Caco-2 (cell line): ENCODE measurements at regions of chr1 and their contacts with region 1.

Region 1: GRCh38 chr1:111507411-111508201 is 4.2 kb upstream of the ADORA3 start:
- DNase-seq: peak; percentile 74
- H3K4me3 ChIP-seq: peak overlapping the region; percentile 36
- H3K4me3 Mint-ChIP-seq: peak overlapping the region; percentile 73
- H3K27ac Mint-ChIP-seq: peak overlapping the region; percentile 94
- H3K4me1 ChIP-seq: peaks cover 28% of the 10 kb centered on the region
- H3K4me1 Mint-ChIP-seq: peaks cover 13% of the 10 kb centered on the region
- H3K27me3 ChIP-seq: no peaks in the 10 kb centered on the region
- H3K27me3 Mint-ChIP-seq: no peaks in the 10 kb centered on the region
- CTCF ChIP-seq: peak in 1 of 2 experiments; percentile 30

Region 2: GRCh38 chr1:111441573-111442192 is 65.9 kb before region 1 on chr1:
- CTCF ChIA-PET with region 1: no interaction called
- POLR2A ChIA-PET with region 1: no interaction called
- intact Hi-C with region 1: no loop called
- DNase-seq: peak; percentile 44 to 53
- H3K4me3 ChIP-seq: no peak overlapping the region
- H3K4me3 Mint-ChIP-seq: no peak overlapping the region
- H3K27ac Mint-ChIP-seq: no peak overlapping the region
- H3K4me1 ChIP-seq: peaks cover 7% of the 10 kb centered on the region
- H3K4me1 Mint-ChIP-seq: peaks cover 13% of the 10 kb centered on the region
- H3K27me3 ChIP-seq: no peaks in the 10 kb centered on the region
- H3K27me3 Mint-ChIP-seq: no peaks in the 10 kb centered on the region
- CTCF ChIP-seq: peak; percentile 41 to 63

Region 3: DNA sequence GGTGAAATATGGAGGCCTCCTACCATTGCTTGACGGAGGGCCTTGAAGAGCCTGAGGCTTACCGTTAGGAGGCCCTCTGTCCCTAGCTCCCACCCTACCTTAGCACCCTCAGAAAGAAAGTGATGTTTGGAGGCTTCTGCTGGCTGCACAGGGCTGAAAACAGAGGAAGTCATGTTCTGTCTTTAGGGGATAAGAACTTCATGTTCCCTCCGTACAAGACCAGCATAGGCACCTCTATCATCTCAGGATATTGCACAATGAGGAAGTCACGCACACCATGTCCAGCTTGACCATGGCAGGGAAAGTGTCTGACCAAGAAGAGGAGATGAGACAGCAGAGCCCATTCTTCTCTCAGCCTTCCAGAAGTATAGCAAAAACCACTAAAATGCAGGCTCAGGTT is 18.0 kb before region 1 on chr1:
- CTCF ChIA-PET with region 1: no interaction called
- POLR2A ChIA-PET with region 1: no interaction called
- intact Hi-C with region 1: no loop called
- DNase-seq: no peak
- H3K4me3 ChIP-seq: no peak overlapping the region
- H3K4me3 Mint-ChIP-seq: no peak overlapping the region
- H3K27ac Mint-ChIP-seq: no peak overlapping the region
- H3K4me1 ChIP-seq: no peaks in the 10 kb centered on the region
- H3K4me1 Mint-ChIP-seq: no peaks in the 10 kb centered on the region
- H3K27me3 ChIP-seq: no peaks in the 10 kb centered on the region
- H3K27me3 Mint-ChIP-seq: no peaks in the 10 kb centered on the region
- CTCF ChIP-seq: no peak

Region 4: DNA sequence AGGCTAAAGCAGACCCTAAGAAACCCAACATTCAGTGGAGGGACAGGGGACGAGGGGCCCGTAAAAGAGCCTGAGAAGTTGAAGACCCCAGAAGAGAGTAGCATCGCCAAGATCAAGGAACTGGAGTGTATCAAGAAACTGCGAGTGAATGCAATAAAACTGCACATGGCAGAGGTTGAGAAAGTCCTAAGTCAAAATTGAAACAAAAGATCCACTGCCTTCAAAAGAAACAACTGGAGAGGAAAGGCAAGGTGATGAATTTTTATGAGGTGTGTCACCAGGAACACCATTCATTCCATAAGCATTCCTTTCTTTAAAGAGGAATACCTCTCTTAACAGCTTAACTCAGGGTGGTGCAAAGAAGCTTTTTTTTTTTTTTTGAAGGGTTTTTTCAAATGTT is 34.1 kb after region 1 on chr1:
- CTCF ChIA-PET with region 1: interaction called, 10 read pairs
- POLR2A ChIA-PET with region 1: no interaction called
- intact Hi-C with region 1: no loop called
- DNase-seq: peak in 1 of 2 experiments; percentile 28
- H3K4me3 ChIP-seq: no peak overlapping the region
- H3K4me3 Mint-ChIP-seq: peak overlapping the region; percentile 80
- H3K27ac Mint-ChIP-seq: peak overlapping the region; percentile 88
- H3K4me1 ChIP-seq: peaks cover 15% of the 10 kb centered on the region
- H3K4me1 Mint-ChIP-seq: peaks cover 27% of the 10 kb centered on the region
- H3K27me3 ChIP-seq: no peaks in the 10 kb centered on the region
- H3K27me3 Mint-ChIP-seq: no peaks in the 10 kb centered on the region
- CTCF ChIP-seq: no peak

Region 5: DNA sequence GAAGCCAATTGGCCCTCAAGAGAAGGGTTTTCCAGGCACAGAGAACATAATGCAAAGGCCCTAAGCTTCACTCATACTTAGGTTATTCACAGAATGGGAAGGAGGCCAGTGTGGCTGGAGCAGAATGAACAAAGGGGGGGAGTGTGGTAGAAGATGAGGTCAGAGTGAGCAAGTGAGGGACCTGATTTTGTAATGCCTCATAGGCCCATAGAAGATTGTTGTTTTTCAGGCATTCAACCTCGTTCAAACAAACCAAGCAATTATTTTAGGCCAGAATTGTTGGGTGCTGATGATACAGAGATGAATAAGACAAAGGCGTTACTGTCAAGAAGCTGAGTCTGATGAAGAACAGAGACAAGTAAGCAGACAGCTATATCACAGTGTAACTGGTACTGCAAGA is 57.5 kb after region 1 on chr1:
- CTCF ChIA-PET with region 1: interaction called, 8 read pairs
- POLR2A ChIA-PET with region 1: no interaction called
- intact Hi-C with region 1: loop called (anchors 5 kb)
- DNase-seq: no peak
- H3K4me3 ChIP-seq: no peak overlapping the region
- H3K4me3 Mint-ChIP-seq: no peak overlapping the region
- H3K27ac Mint-ChIP-seq: peak overlapping the region; percentile 73
- H3K4me1 ChIP-seq: peaks cover 45% of the 10 kb centered on the region
- H3K4me1 Mint-ChIP-seq: peaks cover 44% of the 10 kb centered on the region
- H3K27me3 ChIP-seq: no peaks in the 10 kb centered on the region
- H3K27me3 Mint-ChIP-seq: no peaks in the 10 kb centered on the region
- CTCF ChIP-seq: no peak

Region 6: DNA sequence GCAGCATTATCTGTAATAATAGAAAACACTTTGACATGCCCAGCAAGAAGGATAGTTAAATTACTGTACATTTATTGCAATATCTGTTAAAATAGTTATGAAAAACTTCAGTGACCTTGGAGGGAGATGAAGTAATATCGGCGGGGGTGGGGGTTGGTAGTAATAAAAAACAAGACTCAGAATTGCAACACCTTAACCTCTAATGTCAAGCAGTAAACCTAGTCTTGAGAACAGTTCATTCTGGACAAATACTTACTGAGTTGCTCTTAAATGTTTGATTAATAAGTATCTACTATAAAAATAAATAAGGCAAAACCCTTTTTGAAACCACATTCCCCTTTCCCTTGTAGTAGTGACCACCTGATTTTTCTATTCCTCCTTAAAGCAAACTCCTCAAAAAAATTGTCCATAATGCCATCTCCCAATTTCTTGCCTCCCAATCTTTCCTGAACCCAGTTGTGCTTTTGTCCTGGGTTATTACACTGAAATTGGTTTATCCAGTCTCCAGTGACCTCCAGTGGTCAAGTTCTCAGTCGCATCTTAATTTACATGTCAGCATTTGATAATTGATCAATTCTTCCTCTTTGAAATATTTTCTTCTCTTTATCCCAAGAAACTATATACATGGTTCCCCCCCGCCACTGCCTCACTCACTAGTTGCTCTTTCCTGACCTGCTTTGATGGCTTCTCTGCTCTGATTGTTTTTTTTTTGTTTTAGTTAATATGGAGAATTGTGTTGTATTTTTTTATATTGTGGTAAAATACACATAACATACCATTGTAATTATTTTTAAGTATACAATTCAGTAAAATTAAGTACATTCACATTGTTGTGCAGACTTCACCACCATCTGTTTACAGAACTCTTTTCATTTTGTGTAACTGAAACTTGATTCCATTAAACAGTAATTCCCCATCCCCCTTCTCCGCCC is 148.7 kb after region 1 on chr1:
- CTCF ChIA-PET with region 1: interaction called, 6 read pairs
- POLR2A ChIA-PET with region 1: no interaction called
- intact Hi-C with region 1: loop called (anchors 1 kb)
- DNase-seq: peak in 1 of 2 experiments; percentile 48
- H3K4me3 ChIP-seq: no peak overlapping the region
- H3K4me3 Mint-ChIP-seq: no peak overlapping the region
- H3K27ac Mint-ChIP-seq: peak overlapping the region; percentile 51
- H3K4me1 ChIP-seq: peaks cover 26% of the 10 kb centered on the region
- H3K4me1 Mint-ChIP-seq: peaks cover 21% of the 10 kb centered on the region
- H3K27me3 ChIP-seq: no peaks in the 10 kb centered on the region
- H3K27me3 Mint-ChIP-seq: no peaks in the 10 kb centered on the region
- CTCF ChIP-seq: peak; percentile 36 to 44

Region 7: DNA sequence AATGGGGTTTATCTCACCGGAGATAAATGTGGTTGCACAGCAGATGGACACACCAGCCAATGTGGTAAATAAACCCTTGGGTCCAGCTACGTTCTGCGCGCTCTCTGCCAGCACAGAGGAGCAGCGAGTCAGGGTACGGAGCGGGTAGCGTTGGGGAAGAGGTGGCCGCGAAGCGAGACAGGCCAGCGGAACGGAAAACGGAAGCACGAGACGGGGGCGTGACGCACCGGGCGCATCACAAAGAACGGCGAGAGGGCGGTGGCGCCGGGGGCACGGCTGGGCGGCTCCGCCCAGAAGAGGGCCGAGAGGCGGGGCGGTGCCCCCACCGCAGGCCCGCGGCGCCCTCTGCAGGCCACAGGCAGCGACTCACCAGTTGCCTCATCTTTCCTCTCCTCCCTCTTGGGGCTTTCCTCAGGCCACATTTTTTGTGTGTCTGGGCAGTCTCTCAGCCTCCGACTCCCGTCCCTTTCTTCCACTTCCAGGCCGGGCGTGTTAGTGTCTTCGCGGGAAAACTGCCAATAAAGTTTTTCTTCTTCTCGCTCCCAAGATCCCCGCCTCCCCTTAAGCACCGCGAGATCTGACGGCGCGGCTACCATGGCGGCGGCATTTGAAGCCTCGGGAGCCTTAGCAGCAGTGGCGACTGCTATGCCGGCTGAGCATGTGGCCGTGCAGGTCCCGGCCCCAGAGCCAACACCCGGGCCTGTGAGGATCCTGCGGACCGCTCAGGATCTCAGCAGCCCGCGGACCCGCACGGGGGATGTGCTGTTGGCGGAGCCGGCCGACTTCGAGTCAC is 247.9 kb after region 1 on chr1 and contains the start of gene DDX20:
- CTCF ChIA-PET with region 1: interaction called, 5 read pairs
- POLR2A ChIA-PET with region 1: no interaction called
- intact Hi-C with region 1: loop called (anchors 5 kb)
- DNase-seq: peak; percentile 86 to 90
- H3K4me3 ChIP-seq: peak within 1 kb of the TSS; percentile 79
- H3K4me3 Mint-ChIP-seq: peak within 1 kb of the TSS; percentile 92
- H3K27ac Mint-ChIP-seq: peak within 1 kb of the TSS; percentile 88
- H3K4me1 ChIP-seq: peaks cover 5% of the 10 kb centered on the region; the same call in 1 of the 2 replicates
- H3K4me1 Mint-ChIP-seq: peaks cover 12% of the 10 kb centered on the region
- H3K27me3 ChIP-seq: no peaks in the 10 kb centered on the region
- H3K27me3 Mint-ChIP-seq: no peaks in the 10 kb centered on the region
- CTCF ChIP-seq: peak; percentile 56 to 80
- total RNA-seq, gene DDX20: 10.4 and 11.6 TPM in 2 replicates